Naive thymus-derived CD4-positive, alpha-beta T cell (primary cell): ENCODE measurements at regions of chr21 and their contacts with region 1.

Region 1: GRCh38 chr21:39388038-39388810 is 39.3 kb upstream of the HMGN1 start:
- DNase-seq: peak; percentile 71 to 93 (median 83)
- ATAC-seq: peak; percentile 87
- H3K4me3 ChIP-seq: peak overlapping the region; percentile 51
- H3K4me3 Mint-ChIP-seq: peak overlapping the region; percentile 83 to 91 (median 90)
- H3K27ac ChIP-seq: peak overlapping the region; percentile 67
- H3K27ac Mint-ChIP-seq: peak overlapping the region; percentile 71 to 94 (median 90)
- H3K4me1 ChIP-seq: peaks cover 11 to 15% of the 10 kb centered on the region in 2 donors
- H3K4me1 Mint-ChIP-seq: peaks cover 18 to 38% (median 31%) of the 10 kb centered on the region in 7 donors
- H3K27me3 ChIP-seq: no peaks in the 10 kb centered on the region
- H3K27me3 Mint-ChIP-seq: no peaks in the 10 kb centered on the region

Region 2: GRCh38 chr21:38505654-38506515 is 882.3 kb before region 1 on chr21:
- CTCF ChIA-PET with region 1: no interaction called
- POLR2A ChIA-PET with region 1: no interaction called
- intact Hi-C with region 1: loop called (anchors 5 kb)
- DNase-seq: peak in 5 of 9 donors; percentile 11 to 34 (median 13)
- ATAC-seq: peak; percentile 65
- H3K4me3 ChIP-seq: no peak overlapping the region
- H3K4me3 Mint-ChIP-seq: no peak overlapping the region
- H3K27ac ChIP-seq: no peak overlapping the region
- H3K27ac Mint-ChIP-seq: no peak overlapping the region
- H3K4me1 ChIP-seq: no peaks in the 10 kb centered on the region
- H3K4me1 Mint-ChIP-seq: peaks cover 9 to 21% (median 11%) of the 10 kb centered on the region in 7 donors
- H3K27me3 ChIP-seq: no peaks in the 10 kb centered on the region
- H3K27me3 Mint-ChIP-seq: peaks cover 21 to 52% (median 50%) of the 10 kb centered on the region in 5 donors

Region 3: DNA sequence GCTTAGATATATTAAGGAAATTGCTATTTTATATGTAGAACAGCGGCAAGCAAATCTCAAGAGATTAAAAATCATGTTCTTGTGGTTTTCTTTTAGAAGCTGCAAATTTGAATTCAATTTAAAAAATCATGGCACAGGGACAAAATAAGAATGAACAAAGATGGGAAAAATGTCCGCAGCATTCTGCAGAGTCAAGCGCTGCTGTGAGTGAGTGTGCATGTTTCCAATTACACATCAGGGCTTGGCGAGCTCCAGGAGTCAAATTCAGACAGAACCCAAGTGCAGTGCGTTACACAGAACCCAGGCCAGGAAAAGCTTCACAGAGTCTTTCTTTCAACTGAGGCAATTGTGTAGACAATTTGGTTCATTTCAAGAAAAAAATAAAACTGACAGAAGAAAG is 856.6 kb before region 1 on chr21:
- CTCF ChIA-PET with region 1: no interaction called
- POLR2A ChIA-PET with region 1: no interaction called
- intact Hi-C with region 1: no loop called
- DNase-seq: no peak
- ATAC-seq: no peak
- H3K4me3 ChIP-seq: no peak overlapping the region
- H3K4me3 Mint-ChIP-seq: no peak overlapping the region
- H3K27ac ChIP-seq: no peak overlapping the region
- H3K27ac Mint-ChIP-seq: no peak overlapping the region
- H3K4me1 ChIP-seq: no peaks in the 10 kb centered on the region
- H3K4me1 Mint-ChIP-seq: no peaks in the 10 kb centered on the region
- H3K27me3 ChIP-seq: no peaks in the 10 kb centered on the region
- H3K27me3 Mint-ChIP-seq: peaks cover 10 to 23% (median 12%) of the 10 kb centered on the region in 5 donors

Region 4: GRCh38 chr21:39258207-39258606 is 130.0 kb before region 1 on chr21:
- CTCF ChIA-PET with region 1: no interaction called
- POLR2A ChIA-PET with region 1: no interaction called
- intact Hi-C with region 1: loop called in 1 of 2 experiments (anchors 5 kb)
- DNase-seq: no peak
- ATAC-seq: no peak
- H3K4me3 ChIP-seq: no peak overlapping the region
- H3K4me3 Mint-ChIP-seq: no peak overlapping the region
- H3K27ac ChIP-seq: no peak overlapping the region
- H3K27ac Mint-ChIP-seq: peak overlapping the region in 1 of 9 donors; percentile 14
- H3K4me1 ChIP-seq: no peaks in the 10 kb centered on the region
- H3K4me1 Mint-ChIP-seq: peaks cover 0 to 20% (median 6%) of the 10 kb centered on the region in 7 donors
- H3K27me3 ChIP-seq: no peaks in the 10 kb centered on the region
- H3K27me3 Mint-ChIP-seq: no peaks in the 10 kb centered on the region

Region 5: GRCh38 chr21:39313571-39314142 is 74.6 kb before region 1 on chr21 and contains the start of gene BRWD1:
- CTCF ChIA-PET with region 1: interaction called, 6 read pairs
- POLR2A ChIA-PET with region 1: interaction called, 22 read pairs
- intact Hi-C with region 1: loop called (anchors 1 kb)
- DNase-seq: peak; percentile 73 to 90 (median 84)
- ATAC-seq: peak; percentile 71
- H3K4me3 ChIP-seq: peak within 1 kb of the TSS; percentile 88
- H3K4me3 Mint-ChIP-seq: peak within 1 kb of the TSS; percentile 91 to 97 (median 94)
- H3K27ac ChIP-seq: peak within 1 kb of the TSS; percentile 92
- H3K27ac Mint-ChIP-seq: peak within 1 kb of the TSS; percentile 89 to 98 (median 94)
- H3K4me1 ChIP-seq: peaks cover 11% of the 10 kb centered on the region in 2 donors
- H3K4me1 Mint-ChIP-seq: peaks cover 28 to 51% (median 45%) of the 10 kb centered on the region in 7 donors
- H3K27me3 ChIP-seq: no peaks in the 10 kb centered on the region
- H3K27me3 Mint-ChIP-seq: no peaks in the 10 kb centered on the region
- total RNA-seq, gene BRWD1: 41.1 to 108 (median 83.9) TPM

Region 6: GRCh38 chr21:39349211-39350093 is 38.8 kb before region 1 on chr21:
- CTCF ChIA-PET with region 1: interaction called, 6 read pairs
- POLR2A ChIA-PET with region 1: interaction called, 20 read pairs
- intact Hi-C with region 1: loop called (anchors 1 kb)
- DNase-seq: peak; percentile 91 to 98 (median 97)
- ATAC-seq: peak; percentile 91
- H3K4me3 ChIP-seq: peak overlapping the region; percentile 79
- H3K4me3 Mint-ChIP-seq: peak overlapping the region; percentile 88 to 99 (median 96)
- H3K27ac ChIP-seq: peak overlapping the region; percentile 87
- H3K27ac Mint-ChIP-seq: peak overlapping the region; percentile 94 to 100 (median 99)
- H3K4me1 ChIP-seq: peaks cover 20 to 25% of the 10 kb centered on the region in 2 donors
- H3K4me1 Mint-ChIP-seq: peaks cover 30 to 49% (median 37%) of the 10 kb centered on the region in 7 donors
- H3K27me3 ChIP-seq: no peaks in the 10 kb centered on the region
- H3K27me3 Mint-ChIP-seq: peaks cover 0 to 16% (median 0%) of the 10 kb centered on the region in 5 donors

Region 7: DNA sequence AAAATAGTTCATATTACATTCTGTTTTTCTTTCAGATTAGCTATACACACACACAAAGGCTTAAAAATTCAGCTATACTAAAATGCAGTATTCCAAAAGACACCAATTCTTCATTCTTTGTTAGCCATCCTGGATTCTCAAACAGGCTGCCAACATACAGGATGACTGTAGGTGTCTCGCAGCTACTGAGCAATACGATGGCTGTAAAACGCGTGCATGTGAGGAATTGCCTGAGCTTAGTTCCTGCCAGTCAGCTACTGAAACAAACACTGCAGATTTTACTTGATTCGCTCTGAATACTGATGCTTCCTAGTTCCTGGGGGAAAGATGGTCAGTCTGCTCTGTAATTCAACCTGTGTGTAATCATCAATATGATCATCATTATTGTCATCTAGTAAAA is 14.6 kb before region 1 on chr21:
- CTCF ChIA-PET with region 1: interaction called, 9 read pairs
- POLR2A ChIA-PET with region 1: interaction called, 5 read pairs
- intact Hi-C with region 1: loop called in 1 of 2 experiments (anchors 1 kb)
- DNase-seq: peak in 5 of 9 donors; percentile 12 to 32 (median 21)
- ATAC-seq: peak; percentile 75
- H3K4me3 ChIP-seq: no peak overlapping the region
- H3K4me3 Mint-ChIP-seq: no peak overlapping the region
- H3K27ac ChIP-seq: no peak overlapping the region
- H3K27ac Mint-ChIP-seq: no peak overlapping the region
- H3K4me1 ChIP-seq: no peaks in the 10 kb centered on the region
- H3K4me1 Mint-ChIP-seq: peaks cover 0 to 5% (median 0%) of the 10 kb centered on the region in 7 donors
- H3K27me3 ChIP-seq: no peaks in the 10 kb centered on the region
- H3K27me3 Mint-ChIP-seq: peaks cover 0 to 26% (median 4%) of the 10 kb centered on the region in 5 donors

Region 8: DNA sequence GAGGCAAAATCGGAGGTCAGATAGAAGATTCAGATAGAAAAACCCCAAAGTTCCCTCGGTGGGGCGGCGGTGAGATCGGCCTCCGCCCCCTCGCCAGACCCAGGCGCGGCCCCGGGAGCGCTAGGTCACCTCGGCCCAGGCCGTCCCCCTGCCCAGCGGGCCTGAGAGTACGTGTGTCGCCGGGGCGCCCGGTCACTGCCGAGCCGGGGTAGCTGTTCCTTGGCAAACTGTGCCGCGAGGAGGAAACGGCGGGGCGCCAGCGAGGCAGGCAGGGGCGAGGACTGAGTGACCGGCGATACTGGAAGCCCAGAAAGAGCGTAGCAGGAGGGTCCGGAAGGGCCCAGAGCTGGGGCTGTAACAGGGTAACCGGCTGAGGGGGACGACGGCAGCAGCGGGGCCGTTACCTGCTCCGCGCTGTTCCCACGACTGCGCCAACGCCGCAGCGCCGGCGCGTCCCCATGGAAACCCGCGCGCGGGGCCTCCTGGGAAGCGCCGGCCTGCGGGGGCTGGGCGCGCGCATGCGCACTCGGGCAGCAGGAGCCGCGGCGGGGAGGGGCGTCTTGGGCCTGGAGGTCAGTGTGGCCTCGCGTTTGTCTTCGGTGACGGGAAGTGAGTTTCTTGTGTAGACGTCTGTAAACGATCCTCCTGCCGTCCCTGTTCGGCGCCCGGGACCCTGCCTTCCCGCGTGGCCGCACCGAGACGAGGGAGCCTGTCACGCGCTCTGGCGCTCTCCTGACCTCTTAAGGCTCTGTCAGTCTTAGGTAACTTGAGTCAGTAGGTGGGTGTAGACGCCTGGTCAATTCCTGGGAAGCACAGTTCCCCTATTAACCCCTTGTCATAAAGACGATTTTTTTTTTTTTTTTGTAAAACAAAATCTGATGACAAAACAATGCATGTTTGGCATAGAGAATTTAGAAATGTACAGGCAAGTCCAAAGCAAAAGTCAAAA is 57.4 kb after region 1 on chr21 and contains the start of gene LCA5L:
- CTCF ChIA-PET with region 1: no interaction called
- POLR2A ChIA-PET with region 1: no interaction called
- intact Hi-C with region 1: loop called in 1 of 2 experiments (anchors 1 kb)
- DNase-seq: peak; percentile 80 to 96 (median 90)
- ATAC-seq: peak; percentile 93
- H3K4me3 ChIP-seq: peak within 1 kb of the TSS; percentile 83
- H3K4me3 Mint-ChIP-seq: peak within 1 kb of the TSS; percentile 91 to 99 (median 94)
- H3K27ac ChIP-seq: peak within 1 kb of the TSS; percentile 76
- H3K27ac Mint-ChIP-seq: peak within 1 kb of the TSS; percentile 86 to 98 (median 94)
- H3K4me1 ChIP-seq: peaks cover 11 to 13% of the 10 kb centered on the region in 2 donors
- H3K4me1 Mint-ChIP-seq: peaks cover 8 to 26% (median 14%) of the 10 kb centered on the region in 7 donors
- H3K27me3 ChIP-seq: peaks cover 0 to 2% of the 10 kb centered on the region in 2 donors
- H3K27me3 Mint-ChIP-seq: peaks cover 0 to 44% (median 14%) of the 10 kb centered on the region in 5 donors
- total RNA-seq, gene LCA5L: not detected